CD4-positive, alpha-beta memory T cell (primary cell): ENCODE measurements at regions of chr16 and their contacts with region 1.

Region 1: DNA sequence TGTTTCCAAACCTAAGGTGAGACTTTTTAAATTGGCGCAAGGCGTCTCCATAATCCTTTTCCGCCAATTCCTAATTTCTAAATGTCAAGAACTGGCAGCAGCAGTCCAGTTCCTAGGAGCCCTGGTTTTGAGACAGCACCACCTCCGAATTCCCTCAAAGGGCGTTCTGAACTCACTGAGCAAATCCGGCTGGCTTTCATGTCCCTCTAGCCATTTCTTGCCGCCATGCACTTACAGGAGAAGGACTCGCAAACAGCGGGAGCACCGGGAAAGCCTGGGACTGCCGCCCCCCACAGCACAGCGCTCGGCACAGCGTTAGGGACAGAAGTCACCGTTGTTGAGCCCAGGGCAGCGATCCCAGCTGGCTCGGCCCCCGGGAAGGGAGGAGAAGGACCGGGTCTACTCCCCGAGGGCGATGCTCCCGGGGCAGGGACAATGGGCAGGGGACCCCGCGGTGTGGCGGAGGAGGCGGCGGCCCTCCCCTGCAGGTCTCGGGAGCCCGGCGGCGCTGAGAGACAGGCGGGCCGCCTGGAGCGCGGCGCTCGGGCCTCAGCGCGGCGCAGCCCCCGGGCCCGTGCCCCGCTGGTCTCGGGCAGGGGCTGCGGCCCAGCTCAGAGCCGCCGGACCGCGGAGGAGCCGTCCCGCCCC is 545 bp downstream of the ARHGAP17 start:
- DNase-seq: peak in 4 of 5 donors; percentile 15 to 48 (median 26)
- H3K4me3 ChIP-seq: peak overlapping the region; percentile 57 to 71
- H3K4me3 Mint-ChIP-seq: peak overlapping the region; percentile 88 to 99 (median 97)
- H3K27ac ChIP-seq: peak overlapping the region; percentile 89
- H3K27ac Mint-ChIP-seq: peak overlapping the region; percentile 92 to 99 (median 97)
- H3K4me1 ChIP-seq: peaks cover 72% of the 10 kb centered on the region
- H3K4me1 Mint-ChIP-seq: peaks cover 58 to 85% (median 73%) of the 10 kb centered on the region in 4 donors
- H3K27me3 ChIP-seq: no peaks in the 10 kb centered on the region
- H3K27me3 Mint-ChIP-seq: no peaks in the 10 kb centered on the region

Region 2: GRCh38 chr16:23296994-23297393 is 1717.6 kb before region 1 on chr16:
- CTCF ChIA-PET with region 1: no interaction called
- POLR2A ChIA-PET with region 1: no interaction called
- intact Hi-C with region 1: no loop called
- DNase-seq: no peak
- H3K4me3 ChIP-seq: no peak overlapping the region
- H3K4me3 Mint-ChIP-seq: no peak overlapping the region
- H3K27ac ChIP-seq: no peak overlapping the region
- H3K27ac Mint-ChIP-seq: no peak overlapping the region
- H3K4me1 ChIP-seq: no peaks in the 10 kb centered on the region
- H3K4me1 Mint-ChIP-seq: peaks cover 0 to 5% (median under 1%) of the 10 kb centered on the region in 4 donors
- H3K27me3 ChIP-seq: no peaks in the 10 kb centered on the region
- H3K27me3 Mint-ChIP-seq: peaks cover 19 to 28% of the 10 kb centered on the region in 2 donors

Region 3: GRCh38 chr16:25031441-25032307 is 17.1 kb after region 1 on chr16:
- CTCF ChIA-PET with region 1: interaction called, 6 read pairs
- POLR2A ChIA-PET with region 1: interaction called, 59 read pairs
- intact Hi-C with region 1: loop called (anchors 1 kb)
- DNase-seq: peak; percentile 90 to 96 (median 94)
- H3K4me3 ChIP-seq: peak overlapping the region; percentile 26 to 75
- H3K4me3 Mint-ChIP-seq: peak overlapping the region; percentile 91 to 98 (median 96)
- H3K27ac ChIP-seq: peak overlapping the region; percentile 70
- H3K27ac Mint-ChIP-seq: peak overlapping the region; percentile 85 to 97 (median 96)
- H3K4me1 ChIP-seq: peaks cover 17% of the 10 kb centered on the region
- H3K4me1 Mint-ChIP-seq: peaks cover 23 to 43% (median 34%) of the 10 kb centered on the region in 4 donors
- H3K27me3 ChIP-seq: no peaks in the 10 kb centered on the region
- H3K27me3 Mint-ChIP-seq: no peaks in the 10 kb centered on the region

Region 4: DNA sequence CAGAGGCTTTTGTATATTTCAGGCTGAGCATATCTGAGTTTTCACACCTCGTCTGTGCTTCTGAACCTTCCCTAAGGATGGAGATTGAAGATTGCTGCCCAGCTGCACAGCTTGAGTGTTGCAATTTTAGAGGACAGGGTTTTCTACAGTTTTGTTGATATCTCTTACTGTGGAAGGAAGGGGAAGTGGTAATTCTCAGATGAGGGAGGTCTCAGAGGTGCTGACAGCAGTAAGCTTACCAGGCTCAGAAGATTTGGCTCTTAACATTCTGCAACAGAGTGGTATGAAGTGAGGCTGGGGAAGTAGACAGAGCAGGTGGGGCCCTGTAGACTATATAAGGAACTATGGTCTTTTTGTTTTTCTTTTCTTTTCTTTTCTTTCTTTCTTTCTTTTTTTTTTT is 46.3 kb after region 1 on chr16:
- CTCF ChIA-PET with region 1: interaction called, 3 read pairs
- POLR2A ChIA-PET with region 1: interaction called, 12 read pairs
- intact Hi-C with region 1: loop called (anchors 5 kb)
- DNase-seq: peak in 4 of 5 donors; percentile 53 to 69 (median 60)
- H3K4me3 ChIP-seq: no peak overlapping the region
- H3K4me3 Mint-ChIP-seq: peak overlapping the region; percentile 60 to 88 (median 77)
- H3K27ac ChIP-seq: peak overlapping the region; percentile 51
- H3K27ac Mint-ChIP-seq: peak overlapping the region; percentile 87 to 97 (median 91)
- H3K4me1 ChIP-seq: peaks cover 45% of the 10 kb centered on the region
- H3K4me1 Mint-ChIP-seq: peaks cover 34 to 56% (median 41%) of the 10 kb centered on the region in 4 donors
- H3K27me3 ChIP-seq: no peaks in the 10 kb centered on the region
- H3K27me3 Mint-ChIP-seq: no peaks in the 10 kb centered on the region